GM10248 (cell line): ENCODE measurements at regions of chr14 and their contacts with region 1.

Region 1: DNA sequence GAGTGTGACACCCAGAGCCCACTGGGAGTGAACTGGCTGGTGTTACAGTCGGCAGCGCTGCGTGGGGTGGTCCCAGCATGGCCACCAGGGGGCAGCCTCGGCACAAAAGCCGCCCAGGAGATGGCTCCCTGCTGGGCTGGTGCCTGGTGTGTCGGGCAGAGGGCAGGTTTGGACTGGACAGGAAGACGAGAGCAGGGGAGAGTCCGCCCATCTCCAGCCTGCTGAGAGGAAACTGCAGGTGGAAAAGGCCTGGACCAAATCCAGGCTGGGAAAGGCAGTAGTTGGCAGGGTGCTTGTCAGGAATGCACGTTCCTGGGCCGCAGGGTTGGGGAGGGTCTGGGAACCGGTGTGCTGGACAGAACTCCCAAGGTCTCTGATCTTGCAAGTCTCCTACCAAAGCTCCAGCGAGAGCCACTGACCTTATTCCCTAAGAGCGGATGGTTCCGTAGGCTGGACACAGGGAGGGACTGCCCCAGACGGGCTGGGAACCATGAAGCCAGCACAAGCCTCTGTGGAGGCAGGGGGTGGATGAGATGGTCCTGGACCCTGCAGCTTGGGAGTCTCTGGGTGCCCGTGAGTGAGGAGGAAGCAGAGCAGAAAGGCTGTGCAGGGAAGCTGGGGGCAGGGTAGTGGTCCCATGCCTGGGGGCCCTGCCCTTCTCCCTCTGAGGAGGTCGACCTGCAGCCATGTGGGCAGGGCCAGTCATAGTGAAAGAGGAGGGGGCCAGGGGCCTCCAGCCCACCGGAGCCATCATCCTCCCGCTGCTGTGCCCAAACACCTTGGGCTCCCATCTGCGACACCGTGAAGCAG is 1.8 kb downstream of the AHNAK2 start:
- DNase-seq: peak; percentile 88
- CTCF ChIP-seq: peak; percentile 97

Region 2: GRCh38 chr14:104965561-104966231 is 10.7 kb before region 1 on chr14:
- CTCF ChIA-PET with region 1: interaction called, 17 read pairs
- POLR2A ChIA-PET with region 1: no interaction called
- DNase-seq: no peak
- CTCF ChIP-seq: no peak

Region 3: GRCh38 chr14:105581551-105582341 is 605.3 kb after region 1 on chr14:
- CTCF ChIA-PET with region 1: no interaction called
- POLR2A ChIA-PET with region 1: no interaction called
- DNase-seq: peak; percentile 68
- CTCF ChIP-seq: no peak